Endothelial cell of umbilical vein (primary cell): ENCODE measurements at regions of chr2 and their contacts with region 1.

Region 1: GRCh38 chr2:229586746-229587705 is 127.3 kb downstream of the DNER start:
- DNase-seq: peak; percentile 53
- H3K4me3 ChIP-seq: no peak overlapping the region
- H3K27ac ChIP-seq: no peak overlapping the region
- H3K4me1 ChIP-seq: no peaks in the 10 kb centered on the region
- H3K27me3 ChIP-seq: no peaks in the 10 kb centered on the region
- CTCF ChIP-seq: peak; percentile 70 to 93
- POLR2A ChIP-seq: no peak

Region 2: GRCh38 chr2:227939271-227940027 is 1647.6 kb before region 1 on chr2:
- CTCF ChIA-PET with region 1: interaction called, 21 read pairs
- POLR2A ChIA-PET with region 1: no interaction called
- dilution Hi-C with region 1: no loop called
- intact Hi-C with region 1: loop called (anchors 1 kb)
- DNase-seq: peak; percentile 22
- H3K4me3 ChIP-seq: no peak overlapping the region
- H3K27ac ChIP-seq: no peak overlapping the region
- H3K4me1 ChIP-seq: no peaks in the 10 kb centered on the region
- H3K27me3 ChIP-seq: no peaks in the 10 kb centered on the region
- CTCF ChIP-seq: peak; percentile 32 to 40
- POLR2A ChIP-seq: no peak

Region 3: GRCh38 chr2:228048838-228049490 is 1538.1 kb before region 1 on chr2:
- CTCF ChIA-PET with region 1: interaction called, 10 read pairs
- POLR2A ChIA-PET with region 1: no interaction called
- dilution Hi-C with region 1: no loop called
- intact Hi-C with region 1: loop called (anchors 1 kb)
- DNase-seq: no peak
- H3K4me3 ChIP-seq: no peak overlapping the region
- H3K27ac ChIP-seq: no peak overlapping the region
- H3K4me1 ChIP-seq: no peaks in the 10 kb centered on the region
- H3K27me3 ChIP-seq: no peaks in the 10 kb centered on the region
- CTCF ChIP-seq: peak in 1 of 2 donors; percentile 12
- POLR2A ChIP-seq: no peak

Region 4: DNA sequence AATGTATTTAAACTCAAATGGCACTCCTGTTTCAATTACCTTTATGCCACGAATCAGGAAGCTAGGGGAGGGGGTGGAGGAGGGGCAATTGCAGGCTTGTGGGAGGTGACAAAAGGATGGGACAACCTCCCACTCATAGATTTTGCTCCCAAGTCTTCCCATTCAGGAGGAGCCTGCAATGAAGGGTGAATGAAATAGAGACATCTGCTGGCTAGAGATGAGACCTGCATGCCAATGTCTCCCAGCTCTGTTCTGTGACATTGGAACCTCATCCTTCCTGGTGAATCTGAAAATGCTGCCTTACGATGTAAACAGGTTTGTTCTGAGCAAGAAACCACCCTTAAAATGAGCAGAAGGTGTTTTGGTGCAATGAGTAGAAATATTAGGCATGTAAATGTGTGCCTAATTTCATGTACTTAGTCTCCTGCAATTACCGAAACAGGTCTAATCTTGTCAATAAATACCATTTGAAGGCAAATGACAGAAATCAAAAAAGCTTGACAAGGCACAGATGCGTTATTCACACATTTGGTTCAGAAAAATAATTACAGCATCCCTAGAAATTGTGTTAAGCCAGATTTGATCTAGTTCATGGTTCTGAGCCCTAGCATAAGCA is 313.2 kb before region 1 on chr2:
- CTCF ChIA-PET with region 1: interaction called, 12 read pairs
- POLR2A ChIA-PET with region 1: no interaction called
- dilution Hi-C with region 1: no loop called
- intact Hi-C with region 1: no loop called
- DNase-seq: peak; percentile 21
- H3K4me3 ChIP-seq: no peak overlapping the region
- H3K27ac ChIP-seq: no peak overlapping the region
- H3K4me1 ChIP-seq: no peaks in the 10 kb centered on the region
- H3K27me3 ChIP-seq: no peaks in the 10 kb centered on the region
- CTCF ChIP-seq: peak; percentile 45 to 51
- POLR2A ChIP-seq: no peak

Region 5: GRCh38 chr2:229438430-229439159 is 148.4 kb before region 1 on chr2:
- CTCF ChIA-PET with region 1: interaction called, 403 read pairs
- POLR2A ChIA-PET with region 1: no interaction called
- dilution Hi-C with region 1: no loop called
- intact Hi-C with region 1: no loop called
- DNase-seq: no peak
- H3K4me3 ChIP-seq: no peak overlapping the region
- H3K27ac ChIP-seq: no peak overlapping the region
- H3K4me1 ChIP-seq: peaks cover 3% of the 10 kb centered on the region
- H3K27me3 ChIP-seq: peaks cover 0 to 2% of the 10 kb centered on the region in 2 experiments
- CTCF ChIP-seq: no peak
- POLR2A ChIP-seq: no peak

Region 6: DNA sequence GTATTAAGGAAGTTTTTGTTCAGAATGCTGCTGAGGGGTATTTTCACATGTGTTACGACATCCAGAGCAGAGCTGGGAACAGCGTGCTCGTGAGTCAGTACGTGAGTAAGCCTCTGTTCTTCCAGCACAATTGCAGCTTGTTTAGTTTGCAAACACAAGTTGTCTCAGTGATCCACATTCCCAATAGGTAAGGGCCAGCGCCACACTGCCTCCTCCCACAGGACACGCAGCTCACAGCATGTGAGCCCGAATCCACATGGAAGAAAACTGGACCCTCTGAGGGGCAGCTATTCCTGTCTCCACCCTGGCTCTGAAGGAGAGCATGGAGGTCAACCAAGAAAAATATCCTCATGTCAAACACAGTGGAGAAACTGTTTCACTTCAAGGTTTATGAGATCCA is 142.0 kb before region 1 on chr2:
- CTCF ChIA-PET with region 1: interaction called, 33 read pairs
- POLR2A ChIA-PET with region 1: no interaction called
- dilution Hi-C with region 1: no loop called
- intact Hi-C with region 1: no loop called
- DNase-seq: peak; percentile 87
- H3K4me3 ChIP-seq: no peak overlapping the region
- H3K27ac ChIP-seq: peak overlapping the region; percentile 56
- H3K4me1 ChIP-seq: peaks cover 8% of the 10 kb centered on the region
- H3K27me3 ChIP-seq: peaks cover 0 to 2% of the 10 kb centered on the region in 2 experiments
- CTCF ChIP-seq: no peak
- POLR2A ChIP-seq: no peak